Activated CD8-positive, alpha-beta memory T cell treated with anti-CD3 and anti-CD28 coated beads, Interleukin-2, amount 10 ng/mL, durations not matched to agents 7 days and 5 days (primary cell): ENCODE measurements at regions of chr2 and their contacts with region 1.

Region 1: DNA sequence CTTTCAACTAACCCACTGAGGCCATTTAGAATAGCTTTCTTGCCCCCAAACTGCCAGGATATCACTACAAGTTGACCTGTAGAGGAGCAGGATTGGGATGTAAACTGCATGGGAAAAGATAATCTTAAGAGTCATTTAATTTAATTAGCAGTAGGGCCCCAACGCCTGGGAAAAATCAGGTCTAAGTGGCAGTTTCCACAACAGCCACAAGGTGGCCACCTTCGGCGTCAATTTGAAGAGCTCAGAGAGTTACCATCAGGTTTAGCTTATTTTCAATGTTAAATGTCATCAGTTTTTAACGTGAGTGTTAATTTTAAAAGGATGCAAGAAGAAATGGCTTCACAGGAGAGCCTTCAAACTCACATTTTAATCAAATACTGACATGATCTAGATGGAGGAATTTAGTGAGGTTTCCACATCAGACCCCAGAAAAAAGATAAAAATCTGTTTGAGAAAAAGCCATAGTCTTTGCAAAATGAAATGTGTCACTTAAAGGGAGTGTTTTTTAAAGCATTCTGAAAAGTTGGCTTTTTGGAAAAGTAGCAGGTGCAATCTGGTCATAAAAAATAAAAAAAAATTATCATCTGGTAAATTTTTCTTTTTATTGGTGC is 77.3 kb upstream of the UPP2 start:
- DNase-seq: peak; percentile 64
- ATAC-seq: peak; percentile 75
- H3K4me3 Mint-ChIP-seq: no peak overlapping the region
- H3K27ac Mint-ChIP-seq: no peak overlapping the region
- H3K4me1 Mint-ChIP-seq: no peaks in the 10 kb centered on the region
- H3K27me3 Mint-ChIP-seq: no peaks in the 10 kb centered on the region

Region 2: GRCh38 chr2:158011055-158011771 is 13.2 kb before region 1 on chr2:
- CTCF ChIA-PET with region 1: interaction called, 10 read pairs
- DNase-seq: no peak
- ATAC-seq: no peak
- H3K4me3 Mint-ChIP-seq: no peak overlapping the region
- H3K27ac Mint-ChIP-seq: no peak overlapping the region
- H3K4me1 Mint-ChIP-seq: peaks cover 23% of the 10 kb centered on the region
- H3K27me3 Mint-ChIP-seq: no peaks in the 10 kb centered on the region

Region 3: GRCh38 chr2:158745044-158745865 is 720.9 kb after region 1 on chr2:
- CTCF ChIA-PET with region 1: interaction called, 36 read pairs
- DNase-seq: peak; percentile 44
- ATAC-seq: no peak
- H3K4me3 Mint-ChIP-seq: no peak overlapping the region
- H3K27ac Mint-ChIP-seq: no peak overlapping the region
- H3K4me1 Mint-ChIP-seq: peaks cover 2% of the 10 kb centered on the region
- H3K27me3 Mint-ChIP-seq: peaks cover 8% of the 10 kb centered on the region

Region 4: GRCh38 chr2:158753641-158754611 is 729.5 kb after region 1 on chr2:
- CTCF ChIA-PET with region 1: interaction called, 36 read pairs
- DNase-seq: no peak
- ATAC-seq: peak; percentile 55
- H3K4me3 Mint-ChIP-seq: no peak overlapping the region
- H3K27ac Mint-ChIP-seq: no peak overlapping the region
- H3K4me1 Mint-ChIP-seq: no peaks in the 10 kb centered on the region
- H3K27me3 Mint-ChIP-seq: peaks cover 6% of the 10 kb centered on the region